ENCODE measurements at regions of chr16 and their contacts with region 1.

Region 1: GRCh38 chr16:57147381-57148221 is 38.2 kb downstream of the PSME3IP1 start:
- DNase-seq: peak in 1 of 2 donors; percentile 61
- ATAC-seq: peak in 7 of 8 donors; percentile 19 to 69 (median 64)
- H3K4me3 ChIP-seq: peak overlapping the region in 2 of 10 donors; percentile 7 to 19
- H3K27ac ChIP-seq: peak overlapping the region in 9 of 10 donors; percentile 66 to 85 (median 78)
- H3K4me1 ChIP-seq: peaks cover 14 to 94% (median 68%) of the 10 kb centered on the region in 9 donors
- H3K27me3 ChIP-seq: no peaks in the 10 kb centered on the region
- CTCF ChIP-seq: no peak

Region 2: DNA sequence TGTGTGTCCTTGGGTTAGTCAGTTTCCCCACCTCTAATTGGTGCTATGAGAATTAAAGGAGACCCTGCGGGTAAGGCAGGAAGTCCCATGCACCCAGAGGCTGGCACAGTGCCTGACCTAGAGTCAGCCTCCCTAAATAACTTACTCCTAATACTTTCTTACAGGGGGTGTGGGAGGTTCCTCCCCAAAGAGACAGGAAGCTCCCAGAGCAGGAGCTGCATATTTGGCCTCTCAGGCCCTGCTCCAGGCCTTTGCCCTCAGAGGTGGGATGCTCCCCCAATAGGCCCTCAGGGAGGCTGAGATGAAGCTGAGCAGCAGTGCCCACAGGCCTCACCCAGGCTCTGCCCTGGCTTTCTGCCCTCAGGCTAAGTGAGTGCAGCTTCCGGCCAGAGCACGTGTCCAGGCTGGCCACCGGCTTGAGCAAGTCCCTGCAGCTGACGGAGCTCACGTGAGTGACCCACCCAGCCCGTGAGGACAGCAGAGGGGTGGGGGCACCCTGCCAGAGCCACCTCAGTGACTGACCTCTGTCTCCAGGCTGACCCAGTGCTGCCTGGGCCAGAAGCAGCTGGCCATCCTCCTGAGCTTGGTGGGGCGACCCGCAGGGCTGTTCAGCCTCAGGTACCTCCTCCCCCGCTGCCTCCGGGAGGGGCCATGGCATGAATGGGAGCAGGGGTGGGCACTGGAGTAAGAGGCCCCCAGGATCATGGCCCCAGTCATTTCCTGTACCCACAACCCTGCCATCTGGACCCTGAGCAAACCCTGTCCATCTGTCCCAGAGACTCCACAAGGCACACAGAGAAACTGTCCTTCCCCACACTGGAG is 86.3 kb before region 1 on chr16:
- intact Hi-C with region 1: no loop called
- DNase-seq: peak; percentile 73 to 74
- ATAC-seq: peak; percentile 85 to 92 (median 90)
- H3K4me3 ChIP-seq: no peak overlapping the region
- H3K27ac ChIP-seq: peak overlapping the region; percentile 53 to 84 (median 75)
- H3K4me1 ChIP-seq: peaks cover 10 to 24% (median 17%) of the 10 kb centered on the region in 9 donors
- H3K27me3 ChIP-seq: no peaks in the 10 kb centered on the region
- CTCF ChIP-seq: no peak

Region 3: DNA sequence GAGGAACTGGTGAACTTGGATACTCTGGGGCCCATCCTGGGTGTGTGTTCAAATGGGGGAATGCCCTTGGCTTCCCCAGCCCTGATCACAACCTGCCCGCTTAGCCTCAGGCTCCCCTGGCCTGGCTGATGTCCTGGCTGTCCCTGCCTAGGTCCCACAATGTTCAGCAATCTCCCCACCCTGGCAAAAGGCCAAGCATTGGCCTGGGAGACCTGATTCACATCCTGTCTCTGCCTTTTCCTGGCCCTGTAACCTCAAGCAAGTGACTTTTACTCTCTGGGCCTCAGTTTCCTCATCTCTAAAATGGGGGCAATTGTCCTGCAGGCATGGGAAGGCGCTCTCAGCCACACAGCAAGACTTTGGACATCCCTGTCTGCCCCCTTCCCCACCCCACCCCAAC is 40.8 kb before region 1 on chr16:
- intact Hi-C with region 1: loop called in 2 of 10 experiments (anchors 5 to 10 kb)
- DNase-seq: peak; percentile 58 to 63
- ATAC-seq: peak in 7 of 8 donors; percentile 48 to 81 (median 76)
- H3K4me3 ChIP-seq: no peak overlapping the region
- H3K27ac ChIP-seq: no peak overlapping the region
- H3K4me1 ChIP-seq: peaks cover 0 to 37% (median 26%) of the 10 kb centered on the region in 9 donors
- H3K27me3 ChIP-seq: no peaks in the 10 kb centered on the region
- CTCF ChIP-seq: no peak

Region 4: DNA sequence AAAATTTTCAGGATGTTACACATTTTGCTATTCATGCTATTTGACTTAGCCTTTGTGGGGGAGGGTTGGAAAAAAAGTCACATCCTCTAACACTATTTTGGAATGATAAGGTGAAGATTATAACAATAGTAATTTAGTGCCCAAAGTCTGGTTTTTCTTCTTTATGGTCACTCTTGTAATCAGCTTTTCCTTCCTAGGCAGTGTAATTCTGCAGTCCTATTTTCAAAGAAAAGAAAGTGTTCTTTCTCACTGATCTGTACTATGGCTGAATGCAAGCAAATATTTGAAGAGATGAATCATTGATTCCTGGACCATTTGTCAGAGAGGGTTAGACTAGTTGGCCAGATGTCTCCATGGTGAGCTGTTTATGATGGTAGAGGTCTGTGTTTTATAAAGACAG is 46.9 kb after region 1 on chr16:
- intact Hi-C with region 1: no loop called
- DNase-seq: no peak
- ATAC-seq: peak in 4 of 8 donors; percentile 44 to 74 (median 53)
- H3K4me3 ChIP-seq: no peak overlapping the region
- H3K27ac ChIP-seq: peak overlapping the region in 2 of 10 donors; percentile 19 to 35
- H3K4me1 ChIP-seq: peaks cover 0 to 66% (median 45%) of the 10 kb centered on the region in 9 donors
- H3K27me3 ChIP-seq: no peaks in the 10 kb centered on the region
- CTCF ChIP-seq: no peak

Region 5: DNA sequence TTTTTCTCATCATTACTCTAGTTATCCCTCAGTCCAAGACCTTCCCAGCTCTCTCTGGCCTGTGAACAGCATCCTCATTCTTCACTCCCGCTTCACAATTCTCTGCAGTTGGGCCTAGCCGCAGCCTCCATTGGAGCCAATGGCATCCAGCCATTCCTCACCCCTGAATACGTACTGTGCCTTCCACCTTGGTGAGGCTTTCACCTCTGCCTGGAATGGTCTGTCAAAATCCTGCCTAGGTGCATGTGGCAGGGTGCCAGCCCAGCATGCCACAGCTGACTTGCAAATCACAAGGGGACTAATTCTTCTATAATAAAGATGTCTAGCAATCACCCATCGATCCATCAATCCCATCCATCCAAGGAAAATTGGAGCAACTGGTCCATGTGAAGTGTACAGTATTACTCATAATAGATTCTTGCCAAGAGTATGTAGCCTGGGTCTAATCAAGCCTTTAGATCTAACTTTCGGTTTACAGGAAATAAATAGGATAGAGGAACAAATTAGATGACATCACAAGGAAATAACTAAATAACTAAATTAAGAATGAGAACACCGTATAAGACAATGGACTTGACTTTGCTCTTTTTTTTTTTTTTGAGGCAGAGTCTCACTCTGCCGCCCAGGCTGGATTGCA is 219.6 kb after region 1 on chr16:
- intact Hi-C with region 1: no loop called
- DNase-seq: no peak
- ATAC-seq: peak; percentile 41 to 73 (median 64)
- H3K4me3 ChIP-seq: no peak overlapping the region
- H3K27ac ChIP-seq: peak overlapping the region in 9 of 10 donors; percentile 25 to 80 (median 46)
- H3K4me1 ChIP-seq: peaks cover 0 to 33% (median 24%) of the 10 kb centered on the region in 9 donors
- H3K27me3 ChIP-seq: no peaks in the 10 kb centered on the region
- CTCF ChIP-seq: no peak

Measured in heart right ventricle (tissue), 16 donors.